Activated B cell treated with CpG ODN at 0.5 μM for 24 hours (primary cell): ENCODE measurements at regions of chr20 and their contacts with region 1.

Region 1: DNA sequence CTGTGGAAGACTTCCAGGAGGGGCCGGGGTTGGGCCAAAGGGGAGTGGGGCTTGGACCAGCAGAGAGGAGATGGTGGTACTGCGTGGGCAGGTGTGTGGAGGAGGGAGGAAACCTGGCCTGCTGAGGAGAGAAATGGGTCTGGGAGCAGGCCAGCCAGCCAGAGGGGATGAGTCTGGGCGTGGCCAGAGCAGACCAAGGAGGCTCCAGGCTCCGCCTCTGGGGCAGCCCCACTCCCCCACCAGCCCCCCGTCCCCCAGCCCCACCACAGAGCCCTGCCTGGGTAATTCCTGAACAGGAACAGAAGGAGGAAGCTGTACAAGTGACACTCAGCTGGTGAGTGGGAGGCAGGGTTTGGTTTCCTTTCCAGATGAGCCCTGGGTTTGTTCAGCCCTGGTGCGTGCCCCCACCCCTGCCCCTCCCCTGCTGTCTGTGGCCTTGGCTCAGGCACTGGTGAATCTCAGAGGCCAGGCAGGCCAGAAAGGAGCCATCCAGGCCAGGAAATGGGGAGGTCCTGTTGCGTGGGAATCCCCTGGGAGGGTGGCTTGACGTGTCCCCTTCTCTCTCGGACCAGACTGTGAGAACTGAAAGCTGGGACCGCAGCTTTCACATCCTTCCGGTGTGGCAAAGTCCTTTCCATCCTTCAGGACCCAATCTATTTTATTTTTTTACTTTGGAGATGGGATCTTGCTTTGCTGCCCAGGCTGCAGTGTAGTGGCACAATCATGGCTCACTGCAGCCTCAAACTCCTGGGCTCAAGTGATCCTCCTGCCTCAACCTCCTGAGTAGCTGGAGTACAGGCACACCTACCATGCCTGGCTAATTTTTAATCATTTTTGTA is 9.4 kb upstream of the SRC start:
- DNase-seq: peak; percentile 50
- ATAC-seq: peak; percentile 74
- H3K4me3 Mint-ChIP-seq: peak overlapping the region; percentile 65
- H3K27ac Mint-ChIP-seq: peak overlapping the region; percentile 92
- H3K4me1 Mint-ChIP-seq: peaks cover 52% of the 10 kb centered on the region
- H3K27me3 Mint-ChIP-seq: no peaks in the 10 kb centered on the region
- CTCF ChIP-seq: no peak

Region 2: GRCh38 chr20:37011147-37011546 is 325.4 kb before region 1 on chr20:
- CTCF ChIA-PET with region 1: no interaction called
- POLR2A ChIA-PET with region 1: no interaction called
- intact Hi-C with region 1: no loop called
- DNase-seq: no peak
- ATAC-seq: no peak
- H3K4me3 Mint-ChIP-seq: no peak overlapping the region
- H3K27ac Mint-ChIP-seq: no peak overlapping the region
- H3K4me1 Mint-ChIP-seq: peaks cover 28% of the 10 kb centered on the region
- H3K27me3 Mint-ChIP-seq: no peaks in the 10 kb centered on the region
- CTCF ChIP-seq: no peak

Region 3: DNA sequence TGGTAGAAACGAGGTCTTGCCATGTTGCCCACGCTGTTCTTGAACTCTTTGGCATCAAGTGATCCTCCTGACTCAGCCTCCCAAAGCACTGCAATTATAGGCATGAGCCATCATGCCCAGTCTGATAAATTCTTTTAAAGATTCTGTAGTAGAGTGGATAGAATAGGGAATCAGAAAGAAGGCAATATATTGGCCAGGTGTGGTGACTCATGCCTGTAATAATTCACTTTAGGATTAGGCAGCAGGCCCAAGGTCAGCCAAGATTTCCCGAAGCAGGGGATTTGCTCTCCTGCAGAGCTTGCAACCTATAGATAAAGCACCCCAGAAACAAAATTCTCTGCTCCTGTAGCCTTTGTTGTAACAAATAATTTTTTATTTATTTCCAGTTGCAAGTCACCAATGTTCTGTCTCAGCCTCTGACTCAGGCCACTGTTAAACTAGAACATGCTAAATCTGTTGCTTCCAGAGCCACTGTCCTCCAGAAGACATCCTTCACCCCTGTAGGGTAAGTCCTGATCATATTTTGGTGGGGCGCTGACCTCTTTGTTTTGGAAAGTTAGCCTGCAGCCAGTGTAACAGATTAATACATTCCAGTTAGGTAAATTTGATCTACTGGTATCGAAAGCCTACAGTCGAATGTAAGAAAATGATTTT is 126.8 kb before region 1 on chr20:
- CTCF ChIA-PET with region 1: no interaction called
- POLR2A ChIA-PET with region 1: no interaction called
- intact Hi-C with region 1: no loop called
- DNase-seq: no peak
- ATAC-seq: no peak
- H3K4me3 Mint-ChIP-seq: no peak overlapping the region
- H3K27ac Mint-ChIP-seq: no peak overlapping the region
- H3K4me1 Mint-ChIP-seq: no peaks in the 10 kb centered on the region
- H3K27me3 Mint-ChIP-seq: no peaks in the 10 kb centered on the region
- CTCF ChIP-seq: no peak

Region 4: DNA sequence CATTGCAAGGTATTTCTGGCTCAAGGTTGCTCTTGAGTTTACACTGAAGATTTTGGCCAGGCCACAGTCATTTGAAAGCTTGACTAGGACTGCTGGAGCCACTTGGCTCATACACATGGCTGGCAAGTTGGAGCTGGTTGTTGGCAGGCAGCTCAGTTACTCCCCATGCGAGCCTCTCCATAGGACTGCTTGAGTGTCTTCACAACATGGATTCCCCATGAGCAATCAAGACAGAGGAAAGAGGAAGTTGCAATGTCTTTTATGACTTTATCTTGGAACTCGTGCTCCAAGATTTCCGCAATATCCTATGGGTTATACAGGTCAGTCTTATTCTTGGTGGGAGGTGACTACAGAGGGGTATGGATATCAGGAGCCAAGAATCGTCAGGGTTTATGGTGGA is 48.5 kb before region 1 on chr20:
- CTCF ChIA-PET with region 1: interaction called, 4 read pairs
- POLR2A ChIA-PET with region 1: interaction called, 17 read pairs
- intact Hi-C with region 1: loop called (anchors 1 kb)
- DNase-seq: no peak
- ATAC-seq: no peak
- H3K4me3 Mint-ChIP-seq: no peak overlapping the region
- H3K27ac Mint-ChIP-seq: no peak overlapping the region
- H3K4me1 Mint-ChIP-seq: peaks cover 35% of the 10 kb centered on the region
- H3K27me3 Mint-ChIP-seq: no peaks in the 10 kb centered on the region
- CTCF ChIP-seq: no peak

Region 5: GRCh38 chr20:37294262-37294981 is 42.2 kb before region 1 on chr20:
- CTCF ChIA-PET with region 1: no interaction called
- POLR2A ChIA-PET with region 1: interaction called, 17 read pairs
- intact Hi-C with region 1: loop called (anchors 1 kb)
- DNase-seq: no peak
- ATAC-seq: no peak
- H3K4me3 Mint-ChIP-seq: no peak overlapping the region
- H3K27ac Mint-ChIP-seq: peak overlapping the region; percentile 15
- H3K4me1 Mint-ChIP-seq: peaks cover 62% of the 10 kb centered on the region
- H3K27me3 Mint-ChIP-seq: no peaks in the 10 kb centered on the region
- CTCF ChIP-seq: no peak

Region 6: GRCh38 chr20:37316116-37316774 is 20.3 kb before region 1 on chr20:
- CTCF ChIA-PET with region 1: no interaction called
- POLR2A ChIA-PET with region 1: interaction called, 32 read pairs
- intact Hi-C with region 1: loop called (anchors 1 kb)
- DNase-seq: peak; percentile 62
- ATAC-seq: peak; percentile 90
- H3K4me3 Mint-ChIP-seq: peak overlapping the region; percentile 59
- H3K27ac Mint-ChIP-seq: peak overlapping the region; percentile 92
- H3K4me1 Mint-ChIP-seq: peaks cover 56% of the 10 kb centered on the region
- H3K27me3 Mint-ChIP-seq: no peaks in the 10 kb centered on the region
- CTCF ChIP-seq: no peak

Region 7: DNA sequence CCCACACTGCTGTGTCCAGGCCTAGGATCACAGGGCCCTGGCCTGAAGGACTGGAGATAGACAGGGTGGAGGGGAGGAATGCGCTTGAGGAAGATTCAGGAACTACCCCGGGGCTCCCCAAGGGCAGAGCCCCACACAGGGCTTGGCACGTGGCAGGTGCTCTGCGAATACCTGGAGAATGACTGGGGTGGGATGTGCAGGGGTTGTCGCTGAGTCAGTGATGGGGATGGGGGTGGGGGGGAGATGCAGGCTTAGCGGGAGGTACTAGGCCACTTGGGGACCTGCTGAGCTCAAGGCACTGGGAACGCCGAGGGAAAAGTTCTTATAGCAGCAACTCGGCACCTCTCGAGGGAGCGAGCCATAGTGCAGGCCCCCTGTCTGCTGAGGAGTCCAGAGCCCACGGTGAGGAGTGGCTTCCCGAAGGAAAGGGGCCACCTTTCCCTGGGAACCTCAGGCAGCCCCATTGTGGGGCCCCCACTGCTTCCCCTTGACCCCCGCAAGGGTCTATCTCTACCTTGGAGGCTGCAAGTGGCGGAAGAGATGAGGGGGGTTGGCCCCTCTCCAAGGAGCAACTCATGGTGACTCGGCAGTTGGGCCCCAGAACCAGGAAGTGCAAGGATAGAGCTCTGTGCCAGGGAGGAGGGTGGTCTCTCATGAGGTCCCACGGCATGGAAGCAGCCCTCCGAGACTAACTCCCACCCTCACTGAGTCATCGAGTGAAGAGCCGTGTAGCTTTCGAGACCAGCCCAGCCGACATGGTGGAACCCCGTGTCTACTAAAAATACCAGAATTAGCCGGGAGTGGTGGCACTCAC is 42.4 kb after region 1 on chr20:
- CTCF ChIA-PET with region 1: no interaction called
- POLR2A ChIA-PET with region 1: interaction called, 12 read pairs
- intact Hi-C with region 1: loop called (anchors 1 kb)
- DNase-seq: no peak
- ATAC-seq: no peak
- H3K4me3 Mint-ChIP-seq: no peak overlapping the region
- H3K27ac Mint-ChIP-seq: no peak overlapping the region
- H3K4me1 Mint-ChIP-seq: peaks cover 62% of the 10 kb centered on the region
- H3K27me3 Mint-ChIP-seq: no peaks in the 10 kb centered on the region
- CTCF ChIP-seq: no peak